ENCODE measurements at regions of chr10 and their contacts with region 1.

Region 1: DNA sequence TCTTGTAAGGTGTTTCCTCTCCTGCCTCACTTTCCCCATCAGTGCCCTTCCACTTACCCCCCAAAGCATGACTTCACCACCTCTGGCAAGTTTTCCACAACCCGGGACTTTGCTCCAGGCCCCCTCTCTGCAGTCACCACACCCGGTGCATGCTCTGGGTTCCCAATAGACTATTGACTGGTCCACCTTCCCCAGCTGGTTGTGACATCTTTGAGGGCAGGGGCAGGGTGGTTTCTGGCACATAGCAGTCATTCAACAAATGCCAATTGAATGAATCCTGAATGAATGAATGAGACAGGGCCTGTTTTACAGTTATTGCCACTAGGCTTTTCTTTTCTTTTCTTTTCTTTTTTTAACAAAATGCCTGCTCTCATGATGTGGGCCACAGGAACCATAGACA is 28.8 kb upstream of the DOCK1 start:
- DNase-seq: no peak
- ATAC-seq: no peak
- H3K4me3 ChIP-seq: no peak overlapping the region
- H3K27ac ChIP-seq: no peak overlapping the region
- H3K4me1 ChIP-seq: no peaks in the 10 kb centered on the region
- H3K27me3 ChIP-seq: peaks cover 10% of the 10 kb centered on the region
- CTCF ChIP-seq: no peak
- POLR2A ChIP-seq: no peak
- RAD21 ChIP-seq: no peak

Region 2: DNA sequence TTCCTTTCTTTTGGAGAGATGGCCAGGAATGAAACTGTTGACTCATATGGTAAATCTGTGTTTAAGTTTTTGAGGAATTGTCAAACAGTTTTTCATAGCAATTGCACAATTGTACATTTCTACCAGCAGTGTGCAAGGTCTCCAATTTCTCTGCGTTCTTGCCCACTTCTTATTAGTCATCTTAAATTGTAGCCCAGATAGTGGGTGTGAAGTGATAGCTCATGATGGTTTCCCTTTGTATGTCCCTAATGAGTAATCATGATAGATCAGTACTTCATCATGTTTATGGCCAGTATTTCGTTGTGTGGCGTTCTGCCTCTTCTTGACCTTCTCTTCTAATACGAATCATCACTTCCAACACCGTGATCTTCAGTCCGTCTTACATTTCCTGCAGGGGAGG is 165.1 kb after region 1 on chr10:
- CTCF ChIA-PET with region 1: no interaction called
- POLR2A ChIA-PET with region 1: no interaction called
- dilution Hi-C with region 1: no loop called
- in situ Hi-C with region 1: no loop called
- intact Hi-C with region 1: no loop called
- DNase-seq: peak; percentile 95
- ATAC-seq: peak; percentile 88
- H3K4me3 ChIP-seq: no peak overlapping the region
- H3K27ac ChIP-seq: peak overlapping the region; percentile 84; the same call in 1 of the 2 replicates
- H3K4me1 ChIP-seq: peaks cover 18% of the 10 kb centered on the region
- H3K27me3 ChIP-seq: no peaks in the 10 kb centered on the region
- CTCF ChIP-seq: 0 out of 2 replicates have a peak, but pooled peaks have one; percentile 15
- POLR2A ChIP-seq: no peak
- RAD21 ChIP-seq: no peak

Region 3: GRCh38 chr10:127073666-127074065 is 197.2 kb after region 1 on chr10:
- CTCF ChIA-PET with region 1: interaction called, 13 read pairs
- POLR2A ChIA-PET with region 1: no interaction called
- dilution Hi-C with region 1: no loop called
- in situ Hi-C with region 1: no loop called
- intact Hi-C with region 1: no loop called
- DNase-seq: no peak
- ATAC-seq: no peak
- H3K4me3 ChIP-seq: no peak overlapping the region
- H3K27ac ChIP-seq: no peak overlapping the region
- H3K4me1 ChIP-seq: no peaks in the 10 kb centered on the region
- H3K27me3 ChIP-seq: no peaks in the 10 kb centered on the region
- CTCF ChIP-seq: no peak
- POLR2A ChIP-seq: no peak
- RAD21 ChIP-seq: no peak

Measured in IMR-90 (cell line).